ENCODE measurements at regions of chr6 and their contacts with region 1.

Region 1: DNA sequence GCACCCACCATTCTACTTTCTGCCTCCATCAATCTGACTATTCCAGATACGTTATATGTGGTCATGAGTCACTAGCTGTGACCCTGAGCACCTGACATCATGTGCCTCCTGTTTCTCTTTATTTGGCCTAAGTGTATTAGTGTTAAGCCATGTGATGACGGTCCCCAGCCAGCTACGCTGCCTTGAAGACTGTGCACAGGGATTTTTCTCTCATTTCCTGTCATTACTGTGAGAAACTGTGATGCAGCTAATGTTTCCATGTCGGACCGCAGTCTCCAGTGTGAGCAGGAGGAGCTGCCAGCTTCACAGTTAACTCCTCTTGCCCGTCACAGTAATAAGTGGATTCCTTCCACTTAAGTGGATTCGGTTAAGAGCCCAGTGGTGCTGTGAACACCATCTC is 9.9 kb upstream of the SPATS1 start:
- DNase-seq: no peak
- ATAC-seq: no peak
- H3K4me3 ChIP-seq: no peak overlapping the region
- H3K27ac ChIP-seq: no peak overlapping the region
- H3K4me1 ChIP-seq: no peaks in the 10 kb centered on the region
- H3K27me3 ChIP-seq: peaks cover 4% of the 10 kb centered on the region; the same call in 1 of the 2 replicates
- CTCF ChIP-seq: no peak

Region 2: DNA sequence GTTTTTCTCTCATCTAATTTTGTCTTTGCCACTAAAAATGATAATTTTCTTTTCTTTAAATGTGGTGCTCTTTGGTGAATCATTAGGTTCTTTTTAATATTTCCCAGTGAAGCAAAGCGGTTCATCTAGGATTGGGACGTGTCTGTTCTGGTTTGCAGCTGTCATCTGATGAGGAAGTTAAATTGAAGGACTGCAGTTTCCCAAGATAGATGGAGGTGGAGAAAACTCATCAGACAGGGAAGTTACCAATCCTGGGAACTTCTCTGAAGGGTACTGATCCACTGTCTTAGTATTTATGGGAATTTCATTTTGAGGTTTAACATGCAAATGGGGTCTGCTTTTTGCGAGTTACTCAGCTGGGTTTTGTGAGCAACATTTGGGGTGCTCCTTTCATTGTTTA is 17.1 kb before region 1 on chr6:
- CTCF ChIA-PET with region 1: no interaction called
- POLR2A ChIA-PET with region 1: interaction called, 12 read pairs
- in situ Hi-C with region 1: no loop called
- intact Hi-C with region 1: no loop called
- DNase-seq: no peak
- ATAC-seq: no peak
- H3K4me3 ChIP-seq: no peak overlapping the region
- H3K27ac ChIP-seq: no peak overlapping the region
- H3K4me1 ChIP-seq: peaks cover 7% of the 10 kb centered on the region; the same call in 1 of the 2 replicates
- H3K27me3 ChIP-seq: peaks cover 16% of the 10 kb centered on the region
- CTCF ChIP-seq: no peak

Region 3: DNA sequence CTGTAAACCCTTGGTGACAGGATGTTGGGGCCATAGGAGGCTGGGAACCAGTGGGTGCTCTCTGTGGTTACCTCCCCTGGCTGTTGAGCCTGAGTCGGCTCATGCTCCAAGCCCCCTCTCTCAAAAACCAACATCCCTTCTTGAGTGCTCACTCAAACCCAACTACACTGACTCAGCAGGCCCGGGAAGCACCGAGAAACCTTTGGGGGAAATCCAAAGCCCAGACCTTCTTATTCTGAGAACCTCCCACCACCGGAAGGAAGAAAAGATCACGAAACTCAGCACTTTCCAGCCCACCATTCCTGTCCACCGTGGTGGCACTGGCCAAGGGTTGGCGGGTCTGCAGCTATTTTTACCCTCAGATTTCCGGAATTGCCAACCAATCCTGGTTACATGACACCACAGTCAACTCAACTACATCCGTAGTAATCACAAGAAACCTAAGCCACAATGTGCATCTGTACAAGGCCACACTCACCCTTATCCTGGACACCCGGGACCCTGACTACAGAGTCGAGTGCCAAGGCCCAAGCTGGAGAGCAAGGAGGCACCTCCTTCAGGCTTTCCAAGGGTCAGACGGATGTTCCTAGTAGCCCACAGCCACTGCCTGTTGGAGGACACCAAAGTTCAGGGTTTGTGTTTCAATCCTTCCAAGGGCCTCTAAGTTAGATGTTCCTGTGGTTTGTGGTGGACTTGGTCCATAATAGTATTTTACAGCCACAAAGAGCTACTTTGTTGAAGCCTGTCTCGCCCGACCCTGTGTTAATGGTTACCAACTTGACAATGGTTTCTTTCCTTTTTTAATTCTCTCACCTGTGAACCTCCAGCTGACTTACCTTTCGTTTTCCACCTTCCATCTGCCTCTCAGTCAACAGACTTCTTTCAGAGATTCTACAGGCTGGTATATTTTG is 371.9 kb after region 1 on chr6:
- CTCF ChIA-PET with region 1: no interaction called
- POLR2A ChIA-PET with region 1: no interaction called
- in situ Hi-C with region 1: no loop called
- intact Hi-C with region 1: no loop called
- DNase-seq: no peak
- ATAC-seq: no peak
- H3K4me3 ChIP-seq: no peak overlapping the region
- H3K27ac ChIP-seq: no peak overlapping the region
- H3K4me1 ChIP-seq: no peaks in the 10 kb centered on the region
- H3K27me3 ChIP-seq: no peaks in the 10 kb centered on the region
- CTCF ChIP-seq: no peak

Region 4: GRCh38 chr6:44829836-44830235 is 497.3 kb after region 1 on chr6:
- CTCF ChIA-PET with region 1: no interaction called
- POLR2A ChIA-PET with region 1: no interaction called
- in situ Hi-C with region 1: no loop called
- intact Hi-C with region 1: no loop called
- DNase-seq: no peak
- ATAC-seq: no peak
- H3K4me3 ChIP-seq: no peak overlapping the region
- H3K27ac ChIP-seq: no peak overlapping the region
- H3K4me1 ChIP-seq: peaks cover 8% of the 10 kb centered on the region
- H3K27me3 ChIP-seq: no peaks in the 10 kb centered on the region
- CTCF ChIP-seq: no peak

Measured in Panc1 (cell line).